Aorta (tissue), 5 donors: ENCODE measurements at regions of chr18 and their contacts with region 1.

Region 1: GRCh38 chr18:13558124-13558523 is 168.2 kb downstream of the FAM210A start:
- DNase-seq: no peak
- ATAC-seq: no peak
- H3K4me3 ChIP-seq: no peak overlapping the region
- H3K27ac ChIP-seq: no peak overlapping the region
- H3K4me1 ChIP-seq: no peaks in the 10 kb centered on the region
- H3K27me3 ChIP-seq: no peaks in the 10 kb centered on the region

Region 2: GRCh38 chr18:13611601-13612195 is 53.6 kb after region 1 on chr18:
- intact Hi-C with region 1: loop called in 1 of 2 experiments (anchors 10 kb)
- DNase-seq: peak; percentile 73 to 85
- ATAC-seq: peak; percentile 63
- H3K4me3 ChIP-seq: peak overlapping the region; percentile 17 to 44
- H3K27ac ChIP-seq: no peak overlapping the region
- H3K4me1 ChIP-seq: no peaks in the 10 kb centered on the region
- H3K27me3 ChIP-seq: no peaks in the 10 kb centered on the region

Region 3: GRCh38 chr18:14043903-14044302 is 485.8 kb after region 1 on chr18:
- intact Hi-C with region 1: no loop called
- DNase-seq: no peak
- ATAC-seq: no peak
- H3K4me3 ChIP-seq: no peak overlapping the region
- H3K27ac ChIP-seq: no peak overlapping the region
- H3K4me1 ChIP-seq: no peaks in the 10 kb centered on the region
- H3K27me3 ChIP-seq: no peaks in the 10 kb centered on the region